ENCODE measurements at regions of chr12 and their contacts with region 1.

Region 1: GRCh38 chr12:93033948-93034347 is 104.9 kb upstream of the EEA1 start:
- DNase-seq: no peak
- H3K4me3 ChIP-seq: no peak overlapping the region
- H3K27ac ChIP-seq: no peak overlapping the region
- H3K4me1 ChIP-seq: no peaks in the 10 kb centered on the region
- H3K27me3 ChIP-seq: no peaks in the 10 kb centered on the region
- CTCF ChIP-seq: no peak

Region 2: DNA sequence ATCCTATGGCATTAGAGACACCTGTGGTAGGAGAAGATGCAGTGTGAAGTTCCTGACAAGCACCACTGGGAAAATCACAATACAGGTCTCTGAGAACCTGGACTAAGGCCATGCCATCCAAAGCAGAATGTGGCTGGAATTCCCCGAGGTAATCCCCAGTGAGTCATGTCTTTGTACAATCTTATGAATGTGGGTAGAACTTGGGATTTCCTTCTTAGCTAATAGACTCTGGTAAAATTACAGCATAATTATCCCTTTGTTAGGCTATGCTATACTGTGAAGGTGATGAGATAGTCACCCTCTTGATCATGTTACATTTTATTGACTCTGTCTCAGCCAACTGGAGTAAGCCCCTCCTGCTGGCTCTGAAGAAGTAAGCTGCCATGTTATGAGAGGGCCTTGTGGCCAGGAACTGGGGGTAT is 1627.0 kb before region 1 on chr12:
- CTCF ChIA-PET with region 1: no interaction called
- POLR2A ChIA-PET with region 1: no interaction called
- intact Hi-C with region 1: no loop called
- DNase-seq: peak; percentile 60 to 87
- H3K4me3 ChIP-seq: no peak overlapping the region
- H3K27ac ChIP-seq: peak overlapping the region; percentile 62
- H3K4me1 ChIP-seq: peaks cover 11% of the 10 kb centered on the region
- H3K27me3 ChIP-seq: no peaks in the 10 kb centered on the region
- CTCF ChIP-seq: no peak

Region 3: DNA sequence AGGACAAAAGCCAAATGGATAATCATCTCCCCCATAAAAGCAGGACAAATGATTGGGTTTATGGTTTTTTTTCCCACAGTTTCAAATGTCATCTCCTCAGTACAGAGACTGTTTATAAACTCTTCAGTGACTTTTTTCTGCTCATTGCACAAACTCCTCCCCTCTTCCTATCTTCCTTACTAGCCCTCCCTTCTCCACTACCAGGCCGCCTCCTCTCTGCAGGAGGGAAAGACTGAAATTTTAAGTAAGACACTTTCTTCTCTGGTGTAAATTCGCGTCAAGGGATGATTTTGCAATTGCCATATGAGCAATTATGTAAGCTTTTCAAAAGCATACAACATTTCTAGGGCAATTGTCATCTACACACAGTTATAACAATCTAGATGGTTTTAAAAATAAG is 925.3 kb before region 1 on chr12:
- CTCF ChIA-PET with region 1: no interaction called
- POLR2A ChIA-PET with region 1: interaction called, 26 read pairs
- intact Hi-C with region 1: no loop called
- DNase-seq: no peak
- H3K4me3 ChIP-seq: no peak overlapping the region
- H3K27ac ChIP-seq: no peak overlapping the region
- H3K4me1 ChIP-seq: no peaks in the 10 kb centered on the region
- H3K27me3 ChIP-seq: no peaks in the 10 kb centered on the region
- CTCF ChIP-seq: no peak

Measured in PC-9 (cell line).